Activated CD4-positive, alpha-beta memory T cell treated with anti-CD3 and anti-CD28 coated beads, Interleukin-2, amount 10 ng/mL, durations not matched to agents 7 days and 5 days (primary cell): ENCODE measurements at regions of chr6 and their contacts with region 1.

Region 1: GRCh38 chr6:36594029-36594815 is at the start of gene SRSF3:
- DNase-seq: peak; percentile 97
- H3K4me3 Mint-ChIP-seq: peak within 1 kb of the TSS; percentile 93
- H3K27ac Mint-ChIP-seq: peak within 1 kb of the TSS; percentile 95
- H3K4me1 Mint-ChIP-seq: peaks cover 37% of the 10 kb centered on the region
- H3K27me3 Mint-ChIP-seq: no peaks in the 10 kb centered on the region
- total RNA-seq, gene SRSF3: 384 to 385 TPM

Region 2: GRCh38 chr6:36423101-36423824 is 171.0 kb before region 1 on chr6:
- CTCF ChIA-PET with region 1: interaction called, 4 read pairs
- POLR2A ChIA-PET with region 1: interaction called, 12 read pairs
- DNase-seq: peak; percentile 98
- H3K4me3 Mint-ChIP-seq: peak overlapping the region; percentile 81
- H3K27ac Mint-ChIP-seq: peak overlapping the region; percentile 77
- H3K4me1 Mint-ChIP-seq: peaks cover 23% of the 10 kb centered on the region
- H3K27me3 Mint-ChIP-seq: peaks cover 1% of the 10 kb centered on the region

Region 3: GRCh38 chr6:36442671-36443470 is 151.4 kb before region 1 on chr6 and contains the starts of genes KCTD20 and PXT1:
- CTCF ChIA-PET with region 1: interaction called, 4 read pairs
- POLR2A ChIA-PET with region 1: interaction called, 10 read pairs
- DNase-seq: peak; percentile 90
- H3K4me3 Mint-ChIP-seq: peak within 1 kb of the TSS; percentile 97
- H3K27ac Mint-ChIP-seq: peak within 1 kb of the TSS; percentile 97
- H3K4me1 Mint-ChIP-seq: peaks cover 39% of the 10 kb centered on the region
- H3K27me3 Mint-ChIP-seq: no peaks in the 10 kb centered on the region
- total RNA-seq, gene KCTD20: 60.7 to 63.6 TPM
- total RNA-seq, gene PXT1: 0.35 TPM in 1 of 2 experiments, not detected in the other

Region 4: DNA sequence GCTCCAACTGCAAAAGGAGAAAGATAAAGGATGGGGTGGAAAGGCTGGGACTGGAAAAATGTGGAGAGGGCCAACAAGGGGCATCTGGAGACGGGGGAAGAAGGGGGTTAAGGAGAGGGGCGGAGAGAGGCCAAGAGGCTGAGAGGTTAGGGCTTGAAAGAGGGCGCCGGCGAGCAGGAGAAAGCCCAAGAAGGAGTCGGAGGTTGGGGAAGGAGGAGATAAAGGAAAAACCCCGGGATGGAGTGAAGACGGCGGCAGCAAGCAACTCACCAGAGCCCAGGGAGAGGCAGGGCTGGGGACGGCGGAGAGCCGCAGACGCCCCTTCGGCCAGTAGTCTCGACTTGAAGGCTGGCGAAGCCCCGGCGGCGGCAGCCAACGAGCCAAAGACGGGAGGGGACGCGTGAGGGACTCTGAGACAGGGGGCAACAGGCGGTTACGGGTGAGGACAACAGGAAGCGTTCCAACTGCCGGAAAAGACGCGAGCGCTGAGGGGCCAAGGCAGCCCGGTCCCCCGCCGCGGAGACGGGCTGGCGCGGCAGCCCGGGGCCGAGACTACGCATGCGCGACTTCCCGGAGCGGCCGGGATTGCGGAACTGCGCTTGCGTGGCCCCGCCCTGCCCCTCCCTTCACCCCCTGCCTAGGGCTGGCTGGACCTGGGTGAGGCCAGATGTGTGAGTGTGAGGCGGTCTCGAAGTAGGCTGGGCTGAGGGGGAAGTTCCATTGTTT is 47.1 kb before region 1 on chr6 and contains the start of gene STK38:
- CTCF ChIA-PET with region 1: interaction called, 5 read pairs
- POLR2A ChIA-PET with region 1: interaction called, 225 read pairs
- DNase-seq: peak; percentile 94
- H3K4me3 Mint-ChIP-seq: peak within 1 kb of the TSS; percentile 96
- H3K27ac Mint-ChIP-seq: peak within 1 kb of the TSS; percentile 92
- H3K4me1 Mint-ChIP-seq: peaks cover 37% of the 10 kb centered on the region
- H3K27me3 Mint-ChIP-seq: no peaks in the 10 kb centered on the region
- total RNA-seq, gene STK38: 88.9 to 93.2 TPM

Region 5: DNA sequence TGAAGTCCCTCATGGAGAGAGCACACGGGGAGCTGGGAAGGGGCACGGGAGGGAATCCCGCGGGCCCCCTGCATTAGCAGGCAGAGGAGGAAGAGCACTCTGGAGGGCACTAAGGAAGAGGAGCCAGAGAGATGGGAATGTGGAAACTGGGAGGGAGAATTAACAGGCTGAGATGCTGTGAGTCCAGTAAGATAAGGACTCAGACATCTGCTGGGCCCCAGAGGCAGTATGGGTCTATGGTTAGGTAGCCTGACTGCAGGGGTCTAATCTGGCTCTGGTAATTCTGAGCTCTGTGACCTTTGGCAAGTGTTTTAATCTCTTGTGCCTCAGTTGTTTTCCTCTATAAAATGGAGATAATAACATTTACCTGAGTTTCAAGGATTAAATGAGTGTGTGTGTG is 15.8 kb before region 1 on chr6:
- CTCF ChIA-PET with region 1: interaction called, 5 read pairs
- POLR2A ChIA-PET with region 1: interaction called, 11 read pairs
- DNase-seq: no peak
- H3K4me3 Mint-ChIP-seq: no peak overlapping the region
- H3K27ac Mint-ChIP-seq: no peak overlapping the region
- H3K4me1 Mint-ChIP-seq: peaks cover 11% of the 10 kb centered on the region
- H3K27me3 Mint-ChIP-seq: no peaks in the 10 kb centered on the region

Region 6: GRCh38 chr6:36605560-36606391 is 11.6 kb after region 1 on chr6:
- CTCF ChIA-PET with region 1: interaction called, 16 read pairs
- POLR2A ChIA-PET with region 1: interaction called, 122 read pairs
- DNase-seq: no peak
- H3K4me3 Mint-ChIP-seq: no peak overlapping the region
- H3K27ac Mint-ChIP-seq: peak overlapping the region; percentile 32
- H3K4me1 Mint-ChIP-seq: peaks cover 69% of the 10 kb centered on the region
- H3K27me3 Mint-ChIP-seq: no peaks in the 10 kb centered on the region

Region 7: GRCh38 chr6:36678518-36679027 is 84.4 kb after region 1 on chr6 and contains the start of gene CDKN1A:
- CTCF ChIA-PET with region 1: interaction called, 3 read pairs
- POLR2A ChIA-PET with region 1: interaction called, 86 read pairs
- DNase-seq: peak; percentile 85
- H3K4me3 Mint-ChIP-seq: peak within 1 kb of the TSS; percentile 95
- H3K27ac Mint-ChIP-seq: peak within 1 kb of the TSS; percentile 97
- H3K4me1 Mint-ChIP-seq: peaks cover 56% of the 10 kb centered on the region
- H3K27me3 Mint-ChIP-seq: no peaks in the 10 kb centered on the region
- total RNA-seq, gene CDKN1A: 107 to 109 TPM